ENCODE measurements at regions of chr4 and their contacts with region 1.

Region 1: DNA sequence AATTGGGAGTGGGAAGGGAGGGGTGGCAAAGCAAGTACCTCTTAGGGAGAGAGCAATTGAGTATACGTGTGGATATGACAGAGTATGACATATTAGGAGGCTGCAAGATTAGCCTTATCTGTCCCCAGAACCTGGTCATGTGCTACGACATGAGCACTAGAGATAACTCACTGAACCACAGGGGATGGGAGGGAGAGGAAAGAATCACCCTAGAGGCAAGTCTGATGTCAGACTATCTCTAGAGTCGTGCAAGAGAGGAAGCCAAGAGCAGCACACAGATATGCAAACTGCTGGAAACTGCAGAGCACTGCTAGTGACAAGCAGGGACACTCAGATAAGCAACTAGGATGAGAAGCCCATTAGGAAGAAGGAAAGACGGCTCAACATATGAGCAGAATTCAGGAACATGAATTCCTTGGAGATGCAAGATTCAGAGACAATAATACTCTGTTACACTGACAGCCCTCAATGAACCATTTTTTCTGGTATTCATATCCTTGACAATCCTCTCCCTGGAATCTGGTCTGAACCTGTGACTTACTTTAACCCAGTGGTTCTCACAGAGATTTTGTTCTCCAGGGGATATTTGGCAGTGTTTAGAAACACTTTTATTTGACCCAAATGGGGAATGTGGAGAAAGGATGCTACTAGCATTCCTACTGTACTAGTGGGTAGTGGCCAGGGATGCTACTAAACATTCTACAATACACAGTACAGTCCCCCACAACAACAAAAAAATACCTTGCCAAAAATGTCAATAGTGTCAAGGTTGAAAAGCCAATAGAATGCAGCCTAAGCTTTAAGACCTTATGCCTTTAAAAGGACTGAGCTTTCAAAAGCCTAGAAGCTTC is 84.0 kb upstream of the BMP2K start:
- DNase-seq: peak in 1 of 2 donors; percentile 33
- ATAC-seq: peak; percentile 81 to 96 (median 88)
- H3K4me3 ChIP-seq: no peak overlapping the region
- H3K27ac ChIP-seq: peak overlapping the region in 8 of 10 donors; percentile 15 to 61 (median 42)
- H3K4me1 ChIP-seq: peaks cover 2 to 39% (median 18%) of the 10 kb centered on the region in 9 donors
- H3K27me3 ChIP-seq: no peaks in the 10 kb centered on the region
- CTCF ChIP-seq: no peak

Region 2: DNA sequence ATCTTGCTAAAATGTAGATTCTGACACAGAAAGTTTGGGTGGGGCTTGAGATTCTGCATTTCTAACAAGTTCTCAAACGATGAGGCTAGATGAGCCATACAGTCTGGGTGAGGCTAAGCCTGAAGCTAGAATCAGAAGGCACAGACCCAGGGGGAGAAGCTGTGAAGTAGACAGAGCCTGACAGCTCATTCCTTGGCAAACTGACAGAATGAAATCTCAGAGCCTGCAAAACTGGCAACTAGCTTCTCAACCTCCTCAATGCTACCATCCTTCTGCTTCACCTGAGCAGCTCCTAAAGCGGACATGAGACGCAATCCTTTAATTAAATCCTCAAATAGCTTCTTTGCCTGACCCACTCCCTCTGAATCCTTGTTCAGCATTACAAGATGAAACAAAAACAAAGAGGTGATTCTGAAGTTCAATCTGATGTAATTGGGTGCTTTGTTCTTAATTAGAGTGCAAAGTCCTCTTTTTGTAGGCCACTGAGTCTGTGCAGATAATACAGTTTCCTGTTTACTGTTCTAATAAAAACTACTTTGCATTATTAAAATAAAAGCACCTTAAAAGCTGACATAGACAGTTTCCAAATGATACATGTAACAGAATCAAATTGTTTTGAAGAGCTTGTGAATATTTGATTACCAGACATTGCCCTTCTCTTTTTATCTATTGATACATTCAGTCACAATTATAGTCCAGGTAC is 12.9 kb after region 1 on chr4:
- intact Hi-C with region 1: no loop called
- DNase-seq: peak in 1 of 2 donors; percentile 13
- ATAC-seq: peak in 5 of 8 donors; percentile 42 to 77 (median 63)
- H3K4me3 ChIP-seq: no peak overlapping the region
- H3K27ac ChIP-seq: no peak overlapping the region
- H3K4me1 ChIP-seq: peaks cover 0 to 10% (median 0%) of the 10 kb centered on the region in 9 donors
- H3K27me3 ChIP-seq: no peaks in the 10 kb centered on the region
- CTCF ChIP-seq: no peak

Region 3: GRCh38 chr4:78734441-78735162 is 42.4 kb after region 1 on chr4:
- intact Hi-C with region 1: loop called in 1 of 10 experiments (anchors 5 kb)
- DNase-seq: no peak
- ATAC-seq: no peak
- H3K4me3 ChIP-seq: no peak overlapping the region
- H3K27ac ChIP-seq: no peak overlapping the region
- H3K4me1 ChIP-seq: no peaks in the 10 kb centered on the region
- H3K27me3 ChIP-seq: no peaks in the 10 kb centered on the region
- CTCF ChIP-seq: no peak

Region 4: DNA sequence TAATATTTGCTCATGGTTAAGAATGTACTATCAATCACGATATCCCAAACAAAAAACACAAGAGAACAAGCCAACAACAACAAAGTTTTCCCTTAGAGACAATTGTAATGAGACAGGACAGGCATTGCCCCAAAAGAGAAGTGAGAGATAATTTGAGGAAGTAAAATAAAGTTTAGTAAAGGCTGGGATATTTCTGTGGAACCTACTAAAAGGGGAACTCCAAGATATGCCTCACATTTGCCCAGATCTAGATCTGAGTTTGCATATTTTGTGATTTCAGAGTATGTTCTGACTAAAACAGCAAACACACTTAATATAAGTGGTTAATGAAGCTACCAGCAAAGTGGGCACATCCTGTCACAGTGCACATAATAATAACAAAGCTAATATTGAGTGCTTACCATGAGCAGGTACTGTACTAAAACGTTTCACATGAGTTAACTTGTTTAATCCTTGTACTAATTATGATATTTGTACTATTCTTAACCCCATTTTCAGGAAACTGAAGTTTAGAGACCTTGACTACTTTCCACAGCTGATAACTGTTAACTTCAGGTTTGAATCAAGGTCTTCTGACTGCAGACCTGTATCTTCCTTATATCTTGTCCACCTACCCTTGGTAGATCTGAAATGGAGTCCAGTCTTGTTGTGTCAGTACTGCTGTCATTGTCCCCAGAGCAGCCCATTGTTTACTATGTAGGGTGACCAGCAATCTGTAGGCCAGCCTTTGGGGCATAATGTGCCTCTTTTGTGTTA is 58.0 kb after region 1 on chr4:
- intact Hi-C with region 1: loop called in 1 of 10 experiments (anchors 10 kb)
- DNase-seq: no peak
- ATAC-seq: peak in 7 of 8 donors; percentile 15 to 74 (median 61)
- H3K4me3 ChIP-seq: no peak overlapping the region
- H3K27ac ChIP-seq: peak overlapping the region in 8 of 10 donors; percentile 1 to 77 (median 40)
- H3K4me1 ChIP-seq: peaks cover 0 to 33% (median 25%) of the 10 kb centered on the region in 9 donors
- H3K27me3 ChIP-seq: no peaks in the 10 kb centered on the region
- CTCF ChIP-seq: no peak

Region 5: DNA sequence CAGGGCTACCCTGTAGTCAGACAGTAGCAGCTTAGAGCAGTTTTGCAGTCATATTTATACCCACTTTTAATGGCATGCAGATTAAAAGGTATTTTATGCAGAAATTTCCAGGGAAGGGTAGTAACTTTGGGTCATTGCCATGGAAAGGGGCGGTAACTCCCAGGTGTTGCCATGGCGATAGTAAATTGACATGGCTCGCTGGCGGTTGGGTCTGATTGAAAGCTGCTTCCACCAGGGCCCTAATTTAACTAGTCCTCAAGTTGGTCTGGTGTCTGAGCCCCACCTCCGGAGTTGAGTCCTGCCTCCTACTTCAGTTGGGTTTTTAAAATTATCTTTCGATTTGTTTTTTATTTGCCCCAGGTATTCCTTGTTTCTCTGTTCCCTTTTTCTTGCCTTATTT is 563.6 kb after region 1 on chr4:
- intact Hi-C with region 1: no loop called
- DNase-seq: no peak
- ATAC-seq: no peak
- H3K4me3 ChIP-seq: no peak overlapping the region
- H3K27ac ChIP-seq: no peak overlapping the region
- H3K4me1 ChIP-seq: no peaks in the 10 kb centered on the region
- H3K27me3 ChIP-seq: no peaks in the 10 kb centered on the region
- CTCF ChIP-seq: no peak